Activated CD4-positive, alpha-beta T cell treated with anti-CD3 and anti-CD28 coated beads for 36 hours (primary cell): ENCODE measurements at regions of chr20 and their contacts with region 1.

Region 1: DNA sequence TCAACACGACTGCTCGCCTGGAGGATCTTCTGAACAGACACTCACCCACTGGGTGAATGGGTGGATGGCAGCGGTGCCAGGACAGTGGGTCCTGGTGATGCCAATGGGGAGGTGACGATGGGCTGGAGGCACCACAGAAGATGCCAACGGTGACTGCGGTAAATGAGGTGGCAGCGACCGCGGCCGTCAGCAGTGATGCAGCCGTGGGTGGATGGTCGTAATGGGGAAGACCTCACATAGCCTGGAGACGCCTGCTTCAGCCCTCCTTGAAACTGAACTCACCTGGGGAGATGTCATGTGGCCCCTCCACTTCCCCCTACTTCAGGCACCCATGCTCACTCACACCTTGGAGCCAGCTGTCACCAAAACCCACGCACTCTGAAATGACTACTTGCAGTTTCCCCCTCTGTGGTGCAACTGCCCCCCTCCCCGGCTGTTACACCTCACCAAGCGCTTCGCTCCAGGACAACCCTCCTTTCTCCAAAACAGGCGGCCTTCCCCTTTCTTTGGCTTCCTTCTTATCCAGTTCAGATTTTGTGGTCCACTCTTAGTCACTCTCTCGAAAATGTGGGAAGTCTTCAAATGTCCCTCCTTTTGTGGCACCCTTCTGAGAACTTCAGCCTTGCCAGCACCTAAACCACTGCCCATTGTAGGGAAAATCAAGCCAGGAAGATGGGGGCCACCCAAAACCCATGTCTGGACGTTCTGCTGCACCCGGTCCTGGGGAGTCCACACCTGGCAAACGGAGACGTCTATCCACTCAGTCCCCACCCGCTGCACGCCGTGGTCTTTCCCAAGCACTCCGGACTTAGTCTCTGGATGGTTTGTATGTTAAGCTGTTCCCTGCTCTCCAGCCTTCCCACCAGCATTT is 10.4 kb upstream of the ABHD16B start:
- DNase-seq: peak; percentile 86
- ATAC-seq: peak; percentile 92
- H3K4me3 Mint-ChIP-seq: no peak overlapping the region
- H3K27ac Mint-ChIP-seq: no peak overlapping the region
- H3K4me1 Mint-ChIP-seq: peaks cover 16% of the 10 kb centered on the region
- H3K27me3 Mint-ChIP-seq: peaks cover 15% of the 10 kb centered on the region

Region 2: GRCh38 chr20:63627129-63627750 is 223.7 kb before region 1 on chr20:
- CTCF ChIA-PET with region 1: no interaction called
- POLR2A ChIA-PET with region 1: no interaction called
- intact Hi-C with region 1: no loop called
- DNase-seq: peak; percentile 97
- ATAC-seq: peak; percentile 77
- H3K4me3 Mint-ChIP-seq: peak overlapping the region; percentile 87
- H3K27ac Mint-ChIP-seq: peak overlapping the region; percentile 97
- H3K4me1 Mint-ChIP-seq: peaks cover 39% of the 10 kb centered on the region
- H3K27me3 Mint-ChIP-seq: no peaks in the 10 kb centered on the region

Region 3: DNA sequence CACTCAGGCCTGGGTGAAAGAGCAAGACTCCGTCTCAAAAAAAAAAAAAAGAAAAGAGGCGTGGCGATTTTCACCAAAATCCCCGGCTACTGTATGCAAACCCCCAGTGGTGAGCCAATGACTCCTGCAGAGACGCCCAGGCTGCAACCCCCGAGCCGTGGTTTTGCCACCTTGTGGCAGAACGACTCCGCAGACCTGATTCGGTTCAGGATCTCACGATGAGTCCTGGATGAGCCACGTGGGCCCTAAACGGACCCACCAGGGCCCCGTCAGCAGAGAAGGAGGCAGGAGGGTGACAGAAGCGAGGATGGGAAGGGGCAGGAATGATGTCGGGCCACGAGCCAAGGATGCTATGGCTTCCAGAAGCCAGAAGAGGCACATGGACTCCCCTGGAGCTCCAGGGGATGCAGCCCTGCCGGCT is 68.9 kb before region 1 on chr20:
- CTCF ChIA-PET with region 1: no interaction called
- POLR2A ChIA-PET with region 1: no interaction called
- intact Hi-C with region 1: no loop called
- DNase-seq: peak; percentile 84
- ATAC-seq: peak; percentile 94
- H3K4me3 Mint-ChIP-seq: no peak overlapping the region
- H3K27ac Mint-ChIP-seq: peak overlapping the region; percentile 28
- H3K4me1 Mint-ChIP-seq: peaks cover 19% of the 10 kb centered on the region
- H3K27me3 Mint-ChIP-seq: no peaks in the 10 kb centered on the region

Region 4: GRCh38 chr20:63830841-63831588 is 19.9 kb before region 1 on chr20 and contains the start of gene ZBTB46:
- CTCF ChIA-PET with region 1: no interaction called
- POLR2A ChIA-PET with region 1: no interaction called
- intact Hi-C with region 1: loop called in 1 of 2 experiments (anchors 1 kb)
- DNase-seq: peak; percentile 54
- ATAC-seq: peak; percentile 40
- H3K4me3 Mint-ChIP-seq: peak within 1 kb of the TSS; percentile 65
- H3K27ac Mint-ChIP-seq: no peak within 1 kb of the TSS
- H3K4me1 Mint-ChIP-seq: peaks cover 15% of the 10 kb centered on the region
- H3K27me3 Mint-ChIP-seq: peaks cover 30% of the 10 kb centered on the region
- total RNA-seq, gene ZBTB46: 0.88 to 1.3 TPM

Region 5: DNA sequence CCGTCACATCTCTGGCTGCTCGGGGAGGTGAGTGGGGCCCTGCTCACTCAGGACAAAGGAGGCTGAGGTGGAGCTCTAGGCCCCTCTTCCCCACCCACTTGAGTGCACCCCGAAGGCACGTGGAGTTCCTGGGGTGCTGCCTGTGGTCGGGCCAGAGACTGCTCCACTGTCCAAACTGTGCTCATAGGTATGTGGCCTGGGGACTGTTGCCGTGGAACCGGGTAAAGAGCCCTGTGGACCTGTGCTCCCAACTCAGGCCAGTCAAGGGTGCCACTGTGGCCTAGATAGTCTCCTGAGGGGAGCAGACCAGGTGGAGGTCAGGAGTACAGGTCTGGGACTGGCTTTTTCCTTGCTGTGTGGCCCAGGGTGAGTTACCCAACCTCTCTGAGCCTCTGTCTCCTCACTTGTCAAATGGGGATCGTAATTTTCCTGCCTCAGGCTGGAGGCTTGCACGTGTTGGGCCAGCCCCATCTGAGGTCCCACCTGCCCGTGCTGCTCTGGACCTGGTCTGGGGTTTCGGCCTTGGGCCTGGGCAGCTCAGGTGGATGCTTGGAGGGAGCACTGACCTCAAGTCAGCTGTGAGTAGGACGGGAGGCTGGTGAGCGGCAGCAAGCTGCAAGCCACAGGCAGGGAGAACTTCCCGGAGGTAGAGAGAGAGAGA is 268.9 kb after region 1 on chr20:
- CTCF ChIA-PET with region 1: no interaction called
- POLR2A ChIA-PET with region 1: no interaction called
- intact Hi-C with region 1: no loop called
- DNase-seq: no peak
- ATAC-seq: peak; percentile 25
- H3K4me3 Mint-ChIP-seq: peak overlapping the region; percentile 41
- H3K27ac Mint-ChIP-seq: peak overlapping the region; percentile 66
- H3K4me1 Mint-ChIP-seq: peaks cover 10% of the 10 kb centered on the region
- H3K27me3 Mint-ChIP-seq: peaks cover 5% of the 10 kb centered on the region